ENCODE measurements at regions of chr5 and their contacts with region 1.

Region 1: GRCh38 chr5:121144764-121145163 is 680.7 kb downstream of the PRR16 start:
- DNase-seq: peak; percentile 65
- H3K4me3 Mint-ChIP-seq: no peak overlapping the region
- H3K27ac Mint-ChIP-seq: no peak overlapping the region
- H3K4me1 Mint-ChIP-seq: peaks cover 6% of the 10 kb centered on the region
- H3K27me3 Mint-ChIP-seq: no peaks in the 10 kb centered on the region
- CTCF ChIP-seq: peak; percentile 9

Region 2: GRCh38 chr5:120817044-120817985 is 327.4 kb before region 1 on chr5:
- CTCF ChIA-PET with region 1: interaction called, 13 read pairs
- POLR2A ChIA-PET with region 1: no interaction called
- intact Hi-C with region 1: loop called (anchors 10 kb)
- DNase-seq: peak; percentile 50
- H3K4me3 Mint-ChIP-seq: no peak overlapping the region
- H3K27ac Mint-ChIP-seq: no peak overlapping the region
- H3K4me1 Mint-ChIP-seq: no peaks in the 10 kb centered on the region
- H3K27me3 Mint-ChIP-seq: no peaks in the 10 kb centered on the region
- CTCF ChIP-seq: peak; percentile 72

Region 3: DNA sequence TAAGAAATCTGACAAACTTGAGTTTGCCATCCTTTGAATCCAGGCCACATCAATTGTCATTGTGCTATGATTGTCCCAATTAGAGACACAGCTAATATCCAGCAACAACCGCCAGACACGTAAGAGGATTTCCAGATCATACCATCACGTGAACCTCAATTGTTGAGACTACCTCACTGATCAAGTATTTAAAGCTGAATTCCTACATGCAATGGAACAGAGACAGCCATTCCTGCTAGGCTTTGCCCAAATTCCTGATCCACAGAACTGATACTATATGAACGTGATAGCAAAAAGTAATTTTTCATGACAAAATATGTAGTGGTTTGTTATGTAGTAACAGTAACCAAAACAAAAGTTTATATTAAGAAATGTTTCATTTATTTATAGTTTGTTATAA is 23.0 kb before region 1 on chr5:
- CTCF ChIA-PET with region 1: no interaction called
- POLR2A ChIA-PET with region 1: no interaction called
- intact Hi-C with region 1: no loop called
- DNase-seq: no peak
- H3K4me3 Mint-ChIP-seq: no peak overlapping the region
- H3K27ac Mint-ChIP-seq: no peak overlapping the region
- H3K4me1 Mint-ChIP-seq: no peaks in the 10 kb centered on the region
- H3K27me3 Mint-ChIP-seq: no peaks in the 10 kb centered on the region
- CTCF ChIP-seq: no peak

Region 4: DNA sequence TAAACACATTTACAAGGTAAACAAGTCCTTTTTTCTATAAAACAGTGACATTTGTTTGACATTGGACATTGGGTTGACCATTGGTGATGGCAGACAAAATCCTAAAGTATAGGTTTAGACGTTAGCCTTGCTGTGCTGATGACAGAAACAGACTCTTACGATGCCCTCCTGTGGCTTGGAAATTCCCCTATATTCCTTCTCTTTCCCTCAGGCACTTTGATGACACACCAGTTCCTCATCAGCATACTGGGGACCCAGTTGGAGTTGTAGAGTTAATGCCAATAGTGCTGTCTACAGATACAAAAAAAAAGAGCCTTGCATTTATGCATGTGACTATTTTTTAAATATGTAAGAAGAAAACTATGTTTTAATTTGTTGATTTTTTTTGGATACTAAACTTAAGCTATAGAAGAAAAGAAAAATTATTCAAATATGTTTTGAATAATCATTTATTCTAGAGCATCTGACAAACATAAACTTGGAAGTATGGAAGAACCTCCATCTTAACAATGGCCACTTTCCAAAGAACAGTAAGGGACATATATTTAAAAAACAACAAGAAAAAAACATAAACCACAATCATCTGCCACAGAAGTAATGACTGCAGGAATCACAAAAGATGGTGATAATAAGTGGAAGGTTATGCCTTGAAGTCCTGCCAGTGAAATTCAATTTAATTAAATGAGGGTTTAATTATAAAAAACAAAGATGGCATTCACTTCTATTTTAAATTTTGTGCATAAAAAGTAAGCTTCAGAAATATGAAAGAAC is 1091.7 kb after region 1 on chr5:
- CTCF ChIA-PET with region 1: no interaction called
- POLR2A ChIA-PET with region 1: no interaction called
- intact Hi-C with region 1: no loop called
- DNase-seq: peak; percentile 77
- H3K4me3 Mint-ChIP-seq: no peak overlapping the region
- H3K27ac Mint-ChIP-seq: no peak overlapping the region
- H3K4me1 Mint-ChIP-seq: peaks cover 8% of the 10 kb centered on the region
- H3K27me3 Mint-ChIP-seq: no peaks in the 10 kb centered on the region
- CTCF ChIP-seq: no peak

Measured in MCF 10A (cell line).